ENCODE measurements at regions of chr21 and their contacts with region 1.

Region 1: GRCh38 chr21:35051287-35051818 is 2.3 kb upstream of the RUNX1 start:
- DNase-seq: peak; percentile 97
- ATAC-seq: peak; percentile 59
- H3K4me3 ChIP-seq: peak overlapping the region; percentile 23; the same call in 1 of the 2 replicates
- H3K27ac ChIP-seq: peak overlapping the region; percentile 91
- H3K4me1 ChIP-seq: peaks cover 46% of the 10 kb centered on the region
- H3K27me3 ChIP-seq: no peaks in the 10 kb centered on the region
- CTCF ChIP-seq: peak; percentile 88

Region 2: GRCh38 chr21:34915364-34915841 is 135.9 kb before region 1 on chr21:
- CTCF ChIA-PET with region 1: no interaction called
- POLR2A ChIA-PET with region 1: interaction called, 16 read pairs
- intact Hi-C with region 1: no loop called
- DNase-seq: peak; percentile 57
- ATAC-seq: peak; percentile 90
- H3K4me3 ChIP-seq: no peak overlapping the region
- H3K27ac ChIP-seq: no peak overlapping the region
- H3K4me1 ChIP-seq: peaks cover 17% of the 10 kb centered on the region
- H3K27me3 ChIP-seq: no peaks in the 10 kb centered on the region
- CTCF ChIP-seq: no peak

Region 3: DNA sequence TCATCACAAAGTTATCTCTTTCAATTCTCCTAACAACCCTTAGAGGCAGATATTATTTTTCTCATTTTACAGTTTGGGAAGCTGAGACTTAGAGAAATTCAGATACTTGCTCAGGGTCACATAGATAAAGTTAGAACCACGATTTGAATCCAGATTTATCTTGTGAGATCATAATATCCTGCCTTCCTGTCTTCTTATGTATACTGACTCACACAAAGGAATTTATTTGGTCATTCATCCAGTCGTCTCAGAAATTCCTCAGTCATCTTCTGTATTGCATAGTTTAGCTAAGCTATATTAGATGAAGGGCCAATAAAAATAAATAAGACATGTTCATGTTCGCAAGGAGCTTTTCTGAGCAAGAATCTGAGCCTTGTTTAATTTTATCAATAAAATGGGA is 33.5 kb after region 1 on chr21:
- CTCF ChIA-PET with region 1: no interaction called
- POLR2A ChIA-PET with region 1: interaction called, 7 read pairs
- intact Hi-C with region 1: loop called (anchors 2 kb)
- DNase-seq: peak; percentile 95
- ATAC-seq: peak; percentile 82
- H3K4me3 ChIP-seq: no peak overlapping the region
- H3K27ac ChIP-seq: peak overlapping the region; percentile 71
- H3K4me1 ChIP-seq: peaks cover 49% of the 10 kb centered on the region
- H3K27me3 ChIP-seq: no peaks in the 10 kb centered on the region
- CTCF ChIP-seq: no peak

Region 4: GRCh38 chr21:35217504-35218060 is 166.2 kb after region 1 on chr21:
- CTCF ChIA-PET with region 1: no interaction called
- POLR2A ChIA-PET with region 1: no interaction called
- intact Hi-C with region 1: loop called (anchors 1 kb)
- DNase-seq: peak; percentile 100
- ATAC-seq: peak; percentile 91
- H3K4me3 ChIP-seq: no peak overlapping the region
- H3K27ac ChIP-seq: peak overlapping the region; percentile 88
- H3K4me1 ChIP-seq: peaks cover 45% of the 10 kb centered on the region
- H3K27me3 ChIP-seq: no peaks in the 10 kb centered on the region
- CTCF ChIP-seq: no peak

Region 5: DNA sequence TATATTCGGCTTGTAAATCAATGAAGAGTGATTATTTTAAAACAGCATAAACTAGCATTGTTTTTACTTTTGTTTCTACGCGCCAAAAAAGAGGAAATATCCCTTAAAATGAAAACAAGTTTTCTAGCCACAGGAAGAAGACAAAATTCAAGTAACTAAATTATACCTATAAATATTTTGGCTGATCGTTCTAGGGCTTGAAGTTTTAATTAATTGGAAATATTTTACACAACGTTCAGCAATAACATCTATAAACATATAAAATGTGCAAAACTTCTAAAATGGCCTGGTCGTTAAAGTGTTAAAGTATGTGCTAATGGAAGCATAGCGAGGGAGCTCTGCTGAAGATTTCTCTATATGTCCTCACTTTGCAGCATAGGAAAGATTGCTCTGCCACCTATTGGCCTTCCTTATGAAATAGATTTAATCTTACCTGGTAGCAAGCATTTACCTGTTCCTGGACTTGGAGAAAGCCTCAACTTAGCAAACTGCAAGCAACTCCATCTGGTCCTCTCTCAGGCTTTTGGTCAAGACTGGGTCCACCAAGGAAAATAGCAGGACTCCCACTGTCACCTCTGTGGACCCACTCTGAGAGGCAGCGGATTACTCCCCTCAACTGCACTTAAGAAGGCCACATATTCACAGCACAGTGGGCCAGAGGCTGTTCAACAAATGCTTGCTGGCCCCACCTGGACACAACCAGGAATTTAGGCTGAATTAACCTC is 349.0 kb after region 1 on chr21:
- CTCF ChIA-PET with region 1: interaction called, 5 read pairs
- POLR2A ChIA-PET with region 1: interaction called, 7 read pairs
- intact Hi-C with region 1: loop called (anchors 1 kb)
- DNase-seq: peak; percentile 90
- ATAC-seq: peak; percentile 82
- H3K4me3 ChIP-seq: no peak overlapping the region
- H3K27ac ChIP-seq: peak overlapping the region; percentile 1; the same call in 1 of the 2 replicates
- H3K4me1 ChIP-seq: peaks cover 41% of the 10 kb centered on the region
- H3K27me3 ChIP-seq: no peaks in the 10 kb centered on the region
- CTCF ChIP-seq: peak; percentile 87

Region 6: GRCh38 chr21:35616090-35616489 is 564.7 kb after region 1 on chr21:
- CTCF ChIA-PET with region 1: no interaction called
- POLR2A ChIA-PET with region 1: no interaction called
- intact Hi-C with region 1: loop called (anchors 2 kb)
- DNase-seq: peak; percentile 49
- ATAC-seq: no peak; the same call in 1 of the 2 replicates
- H3K4me3 ChIP-seq: no peak overlapping the region
- H3K27ac ChIP-seq: no peak overlapping the region
- H3K4me1 ChIP-seq: peaks cover 22% of the 10 kb centered on the region
- H3K27me3 ChIP-seq: no peaks in the 10 kb centered on the region
- CTCF ChIP-seq: peak; percentile 72

Region 7: DNA sequence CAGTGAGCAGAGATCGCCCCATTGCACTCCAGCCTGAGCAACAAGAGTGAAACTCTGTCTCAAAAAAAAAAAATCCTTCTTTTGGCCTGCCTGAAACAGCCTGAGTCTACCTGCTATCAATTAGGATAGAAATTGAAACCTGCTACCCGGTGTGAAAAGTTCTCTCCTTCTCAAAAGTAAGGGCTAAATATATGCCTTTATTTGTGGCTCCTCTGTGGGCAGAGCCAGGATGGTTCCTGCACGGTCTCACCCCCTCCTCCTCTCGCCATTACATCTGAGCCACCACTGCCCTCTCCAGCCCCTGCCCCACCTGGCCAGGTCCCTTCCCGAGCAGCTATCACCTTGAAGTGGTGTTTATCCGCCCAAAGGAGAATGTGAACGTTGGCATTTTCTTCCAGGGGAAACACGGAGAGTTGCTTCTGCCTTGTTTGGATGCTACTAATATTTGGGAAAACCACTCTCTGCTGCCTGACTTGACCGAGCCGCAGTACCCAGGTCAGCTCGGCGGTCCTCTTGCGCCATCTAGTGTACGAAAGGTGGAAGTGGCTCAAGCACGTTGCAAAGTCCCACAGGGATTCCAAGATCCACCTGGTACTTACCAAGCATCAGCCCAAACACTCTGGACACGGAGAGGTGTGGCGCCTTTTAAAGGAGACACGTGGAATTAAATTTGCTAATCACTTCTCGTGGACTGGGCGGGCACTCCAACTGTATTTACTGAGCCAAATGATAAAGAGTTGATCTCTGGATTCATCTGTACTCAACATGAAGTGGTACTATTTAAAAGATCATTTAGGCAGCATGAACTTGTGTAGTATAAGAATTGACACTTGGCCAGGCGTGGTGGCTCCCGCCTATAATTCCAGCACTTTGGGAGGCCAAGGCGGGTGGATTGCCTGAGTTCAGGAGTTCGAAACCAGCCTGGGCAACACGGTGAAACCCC is 977.0 kb after region 1 on chr21:
- CTCF ChIA-PET with region 1: no interaction called
- POLR2A ChIA-PET with region 1: no interaction called
- intact Hi-C with region 1: loop called (anchors 5 kb)
- DNase-seq: peak; percentile 89
- ATAC-seq: peak; percentile 97
- H3K4me3 ChIP-seq: no peak overlapping the region
- H3K27ac ChIP-seq: no peak overlapping the region
- H3K4me1 ChIP-seq: no peaks in the 10 kb centered on the region
- H3K27me3 ChIP-seq: no peaks in the 10 kb centered on the region
- CTCF ChIP-seq: peak; percentile 97

Measured in PC-3 (cell line).